HepG2 (cell line): ENCODE measurements at regions of chr14 and their contacts with region 1.

Region 1: DNA sequence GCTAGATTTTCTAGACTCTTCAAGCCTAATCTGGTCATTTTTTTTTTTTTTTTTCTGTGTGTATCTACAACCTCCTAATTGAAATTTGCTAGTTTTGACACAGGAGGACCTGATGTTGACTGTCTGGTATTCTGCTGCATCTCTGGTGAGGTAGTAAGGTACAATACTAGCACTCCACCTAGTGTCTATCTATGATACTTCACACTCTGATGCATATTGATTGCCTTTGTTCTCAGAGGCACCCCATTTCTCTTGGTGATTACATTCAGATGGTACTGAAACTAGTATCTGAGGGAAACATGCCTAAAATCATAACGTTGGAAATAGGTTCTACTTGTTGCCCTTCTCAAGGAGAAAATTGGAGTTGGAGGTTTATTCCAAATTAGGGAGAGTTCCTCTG is 930.5 kb upstream of the NOVA1 start:
- DNase-seq: peak; percentile 21
- ATAC-seq: peak; percentile 88
- H3K4me3 ChIP-seq: no peak overlapping the region
- H3K27ac ChIP-seq: no peak overlapping the region
- H3K4me1 ChIP-seq: no peaks in the 10 kb centered on the region
- H3K27me3 ChIP-seq: no peaks in the 10 kb centered on the region
- CTCF ChIP-seq: peak; percentile 59
- EP300 ChIP-seq: no peak
- POLR2A ChIP-seq: no peak
- RAD21 ChIP-seq: no peak

Region 2: DNA sequence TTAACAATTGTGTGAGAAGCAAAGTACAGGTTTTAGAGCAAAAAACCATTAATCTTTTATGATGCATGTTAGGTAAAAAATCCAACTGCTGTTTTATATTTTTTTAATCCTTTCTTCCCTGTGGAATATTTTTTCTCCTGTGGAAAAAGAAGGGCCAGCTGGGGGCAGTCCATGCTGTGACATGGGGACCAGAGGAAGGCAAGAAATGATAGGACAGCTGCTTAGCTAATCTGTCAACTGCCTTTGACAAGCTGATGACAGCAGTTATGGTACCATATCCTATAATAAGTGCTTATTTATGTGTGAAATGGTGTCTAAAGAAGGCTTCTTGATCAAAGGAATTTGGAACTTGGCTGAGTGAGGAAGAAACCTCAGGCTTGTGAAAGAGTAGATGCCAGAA is 478.1 kb before region 1 on chr14:
- CTCF ChIA-PET with region 1: no interaction called
- POLR2A ChIA-PET with region 1: no interaction called
- in situ Hi-C with region 1: no loop called
- intact Hi-C with region 1: loop called (anchors 5 kb)
- DNase-seq: no peak
- ATAC-seq: no peak
- H3K4me3 ChIP-seq: no peak overlapping the region
- H3K27ac ChIP-seq: no peak overlapping the region
- H3K4me1 ChIP-seq: no peaks in the 10 kb centered on the region
- H3K27me3 ChIP-seq: no peaks in the 10 kb centered on the region
- CTCF ChIP-seq: no peak
- EP300 ChIP-seq: no peak
- POLR2A ChIP-seq: no peak
- RAD21 ChIP-seq: no peak

Region 3: GRCh38 chr14:27485193-27485592 is 43.1 kb before region 1 on chr14:
- CTCF ChIA-PET with region 1: no interaction called
- POLR2A ChIA-PET with region 1: no interaction called
- in situ Hi-C with region 1: no loop called
- intact Hi-C with region 1: loop called (anchors 1 kb)
- DNase-seq: no peak
- ATAC-seq: no peak
- H3K4me3 ChIP-seq: no peak overlapping the region
- H3K27ac ChIP-seq: no peak overlapping the region
- H3K4me1 ChIP-seq: no peaks in the 10 kb centered on the region
- H3K27me3 ChIP-seq: no peaks in the 10 kb centered on the region
- CTCF ChIP-seq: no peak
- EP300 ChIP-seq: no peak
- POLR2A ChIP-seq: no peak
- RAD21 ChIP-seq: no peak